HepG2 (cell line): ENCODE measurements at regions of chr4 and their contacts with region 1.

Region 1: DNA sequence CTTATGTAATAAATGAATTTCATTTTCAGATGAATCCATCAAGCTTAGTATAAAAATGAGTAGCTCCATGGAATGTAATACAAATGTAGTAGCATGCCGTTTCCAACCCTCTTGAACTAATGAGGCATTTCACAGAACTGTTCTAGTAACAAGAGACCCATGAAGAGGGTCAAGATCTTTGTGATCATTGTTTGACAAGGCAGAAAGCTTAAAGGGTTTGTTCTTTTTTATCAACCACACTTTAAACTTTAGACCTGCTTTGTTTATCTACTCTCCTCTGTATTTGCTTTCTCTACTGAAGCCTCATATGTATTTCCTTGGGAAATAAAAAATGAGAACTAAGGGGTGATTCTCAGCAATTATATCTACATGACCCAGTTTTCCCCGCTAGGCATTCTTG is 513.9 kb downstream of the ARAP2 start:
- DNase-seq: peak; percentile 51
- ATAC-seq: peak; percentile 81
- H3K4me3 ChIP-seq: no peak overlapping the region
- H3K27ac ChIP-seq: no peak overlapping the region
- H3K4me1 ChIP-seq: peaks cover 25% of the 10 kb centered on the region
- H3K27me3 ChIP-seq: no peaks in the 10 kb centered on the region
- CTCF ChIP-seq: no peak
- EP300 ChIP-seq: no peak; a peak in 1 of 4 replicates
- POLR2A ChIP-seq: no peak
- RAD21 ChIP-seq: no peak

Region 2: DNA sequence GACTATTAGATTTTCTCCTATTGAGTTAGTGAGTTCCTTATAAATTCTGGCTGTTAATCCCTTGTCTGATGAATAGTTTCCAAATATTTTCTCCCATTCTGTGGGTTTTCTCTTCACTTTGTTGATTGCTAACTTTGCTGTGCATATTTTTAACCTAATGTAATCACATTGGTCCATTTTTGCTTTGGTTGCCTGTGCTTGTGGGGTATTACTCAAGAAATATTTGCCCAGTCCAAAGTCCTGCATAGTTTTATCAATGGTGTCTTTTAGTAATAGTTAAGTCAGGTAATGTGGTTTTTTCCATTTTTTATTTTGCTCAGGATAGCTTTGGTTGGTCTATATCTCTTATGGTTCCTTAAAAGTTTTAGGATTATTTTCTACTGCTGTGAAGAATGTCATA is 23.6 kb after region 1 on chr4:
- CTCF ChIA-PET with region 1: no interaction called
- POLR2A ChIA-PET with region 1: no interaction called
- in situ Hi-C with region 1: no loop called
- intact Hi-C with region 1: loop called (anchors 2 kb)
- DNase-seq: peak; percentile 88
- ATAC-seq: peak; percentile 90
- H3K4me3 ChIP-seq: no peak overlapping the region
- H3K27ac ChIP-seq: no peak overlapping the region
- H3K4me1 ChIP-seq: peaks cover 34% of the 10 kb centered on the region
- H3K27me3 ChIP-seq: no peaks in the 10 kb centered on the region
- CTCF ChIP-seq: no peak
- EP300 ChIP-seq: peak in 1 of 2 experiments; percentile 58; a peak in 1 of 4 replicates
- POLR2A ChIP-seq: no peak
- RAD21 ChIP-seq: no peak

Region 3: DNA sequence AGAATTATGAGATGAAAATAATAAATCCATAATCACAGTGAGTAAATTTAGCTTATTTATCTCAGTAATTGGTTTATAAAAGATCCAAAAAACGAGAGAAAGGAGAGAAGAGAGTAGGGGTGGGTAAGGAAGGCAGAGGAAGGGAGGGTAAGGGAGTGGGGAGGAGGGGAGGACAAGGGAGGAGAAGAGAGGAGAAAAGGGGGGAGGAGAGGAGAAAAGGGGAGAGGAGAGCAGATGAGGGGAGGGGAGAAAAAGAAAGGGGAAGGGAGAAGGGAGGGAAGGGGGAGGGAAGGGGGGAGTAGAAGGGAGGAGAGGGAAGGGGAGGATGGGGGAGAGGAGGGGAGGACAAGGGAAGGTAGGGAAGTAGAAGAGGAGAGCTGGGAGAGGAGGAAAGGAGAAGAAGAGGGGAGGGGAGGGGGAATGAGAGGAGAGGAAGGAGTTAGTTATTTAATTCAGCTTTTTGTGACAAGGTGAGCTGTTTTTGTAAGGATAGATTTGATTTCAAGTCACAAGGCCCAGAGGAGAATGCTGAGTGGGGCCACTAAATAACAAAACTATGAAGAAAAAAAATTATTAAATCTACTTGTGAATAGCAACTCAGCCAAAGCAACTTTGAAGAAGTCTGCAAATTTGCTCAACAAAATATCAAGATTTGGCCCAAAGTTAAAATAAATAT is 59.6 kb after region 1 on chr4:
- CTCF ChIA-PET with region 1: no interaction called
- POLR2A ChIA-PET with region 1: no interaction called
- in situ Hi-C with region 1: no loop called
- intact Hi-C with region 1: no loop called
- DNase-seq: no peak
- ATAC-seq: no peak
- H3K4me3 ChIP-seq: no peak overlapping the region
- H3K27ac ChIP-seq: no peak overlapping the region
- H3K4me1 ChIP-seq: no peaks in the 10 kb centered on the region
- H3K27me3 ChIP-seq: no peaks in the 10 kb centered on the region
- CTCF ChIP-seq: no peak
- EP300 ChIP-seq: no peak
- POLR2A ChIP-seq: no peak
- RAD21 ChIP-seq: no peak

Region 4: GRCh38 chr4:35884714-35885480 is 154.5 kb after region 1 on chr4:
- CTCF ChIA-PET with region 1: no interaction called
- POLR2A ChIA-PET with region 1: no interaction called
- in situ Hi-C with region 1: no loop called
- intact Hi-C with region 1: no loop called
- DNase-seq: no peak
- ATAC-seq: no peak
- H3K4me3 ChIP-seq: no peak overlapping the region
- H3K27ac ChIP-seq: no peak overlapping the region
- H3K4me1 ChIP-seq: no peaks in the 10 kb centered on the region
- H3K27me3 ChIP-seq: no peaks in the 10 kb centered on the region
- CTCF ChIP-seq: no peak
- EP300 ChIP-seq: no peak
- POLR2A ChIP-seq: no peak
- RAD21 ChIP-seq: no peak

Region 5: GRCh38 chr4:36006226-36006625 is 275.8 kb after region 1 on chr4:
- CTCF ChIA-PET with region 1: no interaction called
- POLR2A ChIA-PET with region 1: no interaction called
- in situ Hi-C with region 1: no loop called
- intact Hi-C with region 1: no loop called
- DNase-seq: no peak
- ATAC-seq: no peak
- H3K4me3 ChIP-seq: no peak overlapping the region
- H3K27ac ChIP-seq: no peak overlapping the region
- H3K4me1 ChIP-seq: no peaks in the 10 kb centered on the region
- H3K27me3 ChIP-seq: no peaks in the 10 kb centered on the region; a peak in 1 of 5 replicates
- CTCF ChIP-seq: no peak
- EP300 ChIP-seq: no peak
- POLR2A ChIP-seq: no peak
- RAD21 ChIP-seq: no peak